Naive thymus-derived CD4-positive, alpha-beta T cell (primary cell): ENCODE measurements at regions of chrX and their contacts with region 1.

Region 1: DNA sequence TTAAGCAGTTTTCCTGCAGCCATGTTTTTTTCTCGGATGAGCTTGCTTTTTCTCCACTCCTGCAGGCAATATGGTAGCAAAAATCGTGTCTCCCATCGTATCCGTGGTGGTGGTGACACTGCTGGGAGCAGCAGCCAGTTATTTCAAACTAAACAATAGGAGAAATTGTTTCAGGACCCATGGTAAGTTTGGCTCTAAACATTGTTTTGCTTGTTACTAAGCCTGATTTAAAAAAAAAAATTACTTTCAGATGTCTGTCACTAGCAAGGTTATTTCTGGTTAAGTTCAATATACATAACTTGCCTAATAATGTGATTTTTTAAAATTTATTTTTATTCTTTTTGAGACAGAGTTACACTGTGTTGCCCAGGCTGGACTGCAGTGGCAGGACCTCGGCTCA is 17.5 kb upstream of the GYG2 start:
- DNase-seq: no peak
- ATAC-seq: no peak
- H3K4me3 ChIP-seq: no peak overlapping the region
- H3K4me3 Mint-ChIP-seq: no peak overlapping the region
- H3K27ac ChIP-seq: no peak overlapping the region
- H3K27ac Mint-ChIP-seq: no peak overlapping the region
- H3K4me1 ChIP-seq: no peaks in the 10 kb centered on the region
- H3K4me1 Mint-ChIP-seq: peaks cover 0 to 4% (median 0%) of the 10 kb centered on the region in 7 donors
- H3K27me3 ChIP-seq: no peaks in the 10 kb centered on the region
- H3K27me3 Mint-ChIP-seq: peaks cover 0 to 12% (median 0%) of the 10 kb centered on the region in 5 donors

Region 2: DNA sequence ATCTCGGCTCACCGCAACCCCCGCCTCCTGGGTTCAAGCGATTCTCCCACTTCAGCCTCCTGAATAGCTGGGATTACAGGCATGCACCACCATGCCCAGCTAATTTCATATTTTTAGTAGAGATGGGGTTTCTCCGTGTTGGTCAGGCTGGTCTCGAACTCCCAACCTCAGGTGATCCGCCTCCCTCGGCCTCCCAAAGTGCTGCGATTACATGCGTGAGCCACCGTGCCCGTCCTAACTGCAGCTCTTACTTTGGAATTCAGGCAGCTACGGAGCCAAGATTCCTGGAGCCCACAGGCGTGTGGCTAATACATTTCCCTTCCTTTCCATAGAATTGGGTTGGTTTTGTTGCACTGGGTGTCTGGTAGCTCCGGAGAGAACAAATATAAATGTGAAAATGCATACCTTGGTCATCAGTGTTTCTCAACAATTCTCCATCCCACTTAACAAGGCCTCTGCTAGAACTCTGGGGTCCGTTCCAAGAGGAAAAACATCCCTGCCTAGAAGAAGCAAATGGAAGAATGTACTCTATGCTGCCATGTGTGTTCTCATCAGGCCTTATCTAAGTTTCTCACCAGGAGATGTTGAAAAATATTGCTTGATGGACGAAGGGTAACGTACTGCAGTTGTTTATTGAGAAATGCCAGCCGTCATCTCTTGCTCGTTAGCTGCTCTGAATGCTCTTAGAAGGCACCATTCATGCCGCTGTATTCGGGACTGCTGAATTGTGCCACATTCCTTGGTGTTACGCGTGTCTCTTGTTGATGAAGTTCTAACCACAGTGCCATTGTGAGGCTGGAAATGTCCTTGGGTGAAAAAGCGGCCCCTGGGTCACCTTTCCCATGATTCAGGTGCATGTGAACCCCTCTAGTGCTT is 170.8 kb before region 1 on chrX:
- CTCF ChIA-PET with region 1: no interaction called
- POLR2A ChIA-PET with region 1: no interaction called
- intact Hi-C with region 1: loop called in 1 of 2 experiments (anchors 1 kb)
- DNase-seq: no peak
- ATAC-seq: no peak
- H3K4me3 ChIP-seq: no peak overlapping the region
- H3K4me3 Mint-ChIP-seq: no peak overlapping the region
- H3K27ac ChIP-seq: no peak overlapping the region
- H3K27ac Mint-ChIP-seq: no peak overlapping the region
- H3K4me1 ChIP-seq: no peaks in the 10 kb centered on the region
- H3K4me1 Mint-ChIP-seq: peaks cover 0 to 4% (median 0%) of the 10 kb centered on the region in 7 donors
- H3K27me3 ChIP-seq: no peaks in the 10 kb centered on the region
- H3K27me3 Mint-ChIP-seq: no peaks in the 10 kb centered on the region

Region 3: GRCh38 chrX:3046253-3047240 is 235.3 kb after region 1 on chrX:
- CTCF ChIA-PET with region 1: no interaction called
- POLR2A ChIA-PET with region 1: no interaction called
- intact Hi-C with region 1: no loop called
- DNase-seq: no peak
- ATAC-seq: no peak
- H3K4me3 ChIP-seq: no peak overlapping the region
- H3K4me3 Mint-ChIP-seq: peak overlapping the region in 1 of 10 donors; percentile 70
- H3K27ac ChIP-seq: no peak overlapping the region
- H3K27ac Mint-ChIP-seq: peak overlapping the region in 1 of 9 donors; percentile 53
- H3K4me1 ChIP-seq: no peaks in the 10 kb centered on the region
- H3K4me1 Mint-ChIP-seq: peaks cover 0 to 7% (median 3%) of the 10 kb centered on the region in 7 donors
- H3K27me3 ChIP-seq: no peaks in the 10 kb centered on the region
- H3K27me3 Mint-ChIP-seq: no peaks in the 10 kb centered on the region